HepG2 (cell line): ENCODE measurements at regions of chr14 and their contacts with region 1.

Region 1: DNA sequence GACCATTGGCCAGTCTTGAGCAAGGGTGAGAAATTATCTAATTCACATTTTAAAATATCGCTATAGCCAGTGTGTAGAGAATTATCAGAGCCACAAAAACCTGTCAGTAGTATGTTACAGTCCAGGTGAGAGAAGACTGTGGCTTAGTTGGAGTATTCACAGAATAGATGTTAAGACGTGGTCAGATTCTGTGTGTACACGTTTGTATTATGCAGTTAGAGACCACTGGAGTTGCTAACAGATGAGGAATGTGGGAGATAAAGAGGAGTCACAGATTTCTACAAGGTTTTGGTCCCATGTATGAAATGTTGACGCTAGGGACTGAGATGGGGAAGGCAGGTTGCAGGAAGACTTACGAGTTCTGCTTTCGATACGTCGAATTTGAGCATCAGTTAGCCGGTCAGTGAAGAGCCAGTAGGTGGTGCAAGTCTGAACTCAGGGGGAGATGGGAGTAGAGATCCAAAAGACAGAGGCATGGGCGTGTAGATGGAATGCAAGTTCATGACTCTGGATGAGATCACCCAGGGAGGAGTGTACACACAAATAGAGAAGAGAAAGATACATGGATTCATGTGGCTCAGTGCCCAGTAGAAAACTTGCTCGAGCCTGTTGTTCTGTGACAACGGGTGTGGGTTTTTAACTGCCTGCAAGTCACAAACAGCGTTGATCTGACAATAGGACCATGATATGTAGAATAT is 114.8 kb upstream of the FLRT2 start:
- DNase-seq: peak; percentile 64
- ATAC-seq: peak; percentile 94
- H3K4me3 ChIP-seq: no peak overlapping the region
- H3K27ac ChIP-seq: no peak overlapping the region
- H3K4me1 ChIP-seq: no peaks in the 10 kb centered on the region
- H3K27me3 ChIP-seq: no peaks in the 10 kb centered on the region
- CTCF ChIP-seq: peak; percentile 43; the same call in 1 of the 2 replicates
- EP300 ChIP-seq: no peak
- POLR2A ChIP-seq: no peak
- RAD21 ChIP-seq: no peak

Region 2: DNA sequence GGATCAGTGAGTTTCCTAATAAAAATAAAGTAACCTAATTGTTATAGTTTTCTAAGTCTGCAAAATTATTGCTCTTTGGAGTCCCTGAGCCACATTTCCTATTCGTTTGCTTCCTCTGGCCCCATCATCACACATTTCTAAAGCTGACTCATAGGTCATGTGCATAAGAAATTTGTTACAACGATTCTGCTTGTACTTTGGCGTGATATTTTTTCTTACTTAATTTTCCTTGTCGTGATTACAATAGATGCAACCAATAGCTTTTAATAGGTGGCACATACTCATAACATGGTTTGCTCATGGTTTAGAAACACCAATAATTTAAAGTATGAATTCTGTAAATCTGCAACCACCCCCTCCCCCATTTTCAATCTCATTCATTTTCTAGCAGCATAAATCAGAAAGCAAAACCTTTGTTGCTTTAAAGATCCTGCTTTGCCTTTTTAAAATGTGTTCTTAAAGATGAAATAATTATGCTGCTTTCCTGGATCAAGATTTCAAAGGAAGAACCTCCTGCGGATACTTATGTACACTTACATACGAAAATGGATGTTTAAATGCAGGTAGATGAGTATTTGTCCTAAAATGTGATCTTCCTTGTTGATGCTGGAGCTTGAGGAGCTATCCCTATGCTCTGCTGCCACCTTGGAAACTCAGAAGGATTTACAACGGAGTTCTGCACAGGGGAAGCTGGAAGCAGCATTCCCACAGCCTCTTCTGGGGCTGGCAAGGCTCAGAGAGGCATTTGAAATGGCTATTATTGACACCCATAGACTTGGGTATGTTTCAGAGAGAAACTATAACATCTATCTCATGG is 113.1 kb after region 1 on chr14:
- CTCF ChIA-PET with region 1: interaction called, 3 read pairs
- POLR2A ChIA-PET with region 1: no interaction called
- in situ Hi-C with region 1: loop called (anchors 10 kb)
- intact Hi-C with region 1: loop called (anchors 2 kb)
- DNase-seq: peak; percentile 41
- ATAC-seq: peak; percentile 84
- H3K4me3 ChIP-seq: no peak overlapping the region; a peak in 1 of 6 replicates
- H3K27ac ChIP-seq: no peak overlapping the region
- H3K4me1 ChIP-seq: no peaks in the 10 kb centered on the region
- H3K27me3 ChIP-seq: peaks cover 4 to 45% of the 10 kb centered on the region in 2 experiments
- CTCF ChIP-seq: peak; percentile 73
- EP300 ChIP-seq: no peak
- POLR2A ChIP-seq: no peak
- RAD21 ChIP-seq: peak; percentile 71